ENCODE measurements at regions of chr19 and their contacts with region 1.

Region 1: DNA sequence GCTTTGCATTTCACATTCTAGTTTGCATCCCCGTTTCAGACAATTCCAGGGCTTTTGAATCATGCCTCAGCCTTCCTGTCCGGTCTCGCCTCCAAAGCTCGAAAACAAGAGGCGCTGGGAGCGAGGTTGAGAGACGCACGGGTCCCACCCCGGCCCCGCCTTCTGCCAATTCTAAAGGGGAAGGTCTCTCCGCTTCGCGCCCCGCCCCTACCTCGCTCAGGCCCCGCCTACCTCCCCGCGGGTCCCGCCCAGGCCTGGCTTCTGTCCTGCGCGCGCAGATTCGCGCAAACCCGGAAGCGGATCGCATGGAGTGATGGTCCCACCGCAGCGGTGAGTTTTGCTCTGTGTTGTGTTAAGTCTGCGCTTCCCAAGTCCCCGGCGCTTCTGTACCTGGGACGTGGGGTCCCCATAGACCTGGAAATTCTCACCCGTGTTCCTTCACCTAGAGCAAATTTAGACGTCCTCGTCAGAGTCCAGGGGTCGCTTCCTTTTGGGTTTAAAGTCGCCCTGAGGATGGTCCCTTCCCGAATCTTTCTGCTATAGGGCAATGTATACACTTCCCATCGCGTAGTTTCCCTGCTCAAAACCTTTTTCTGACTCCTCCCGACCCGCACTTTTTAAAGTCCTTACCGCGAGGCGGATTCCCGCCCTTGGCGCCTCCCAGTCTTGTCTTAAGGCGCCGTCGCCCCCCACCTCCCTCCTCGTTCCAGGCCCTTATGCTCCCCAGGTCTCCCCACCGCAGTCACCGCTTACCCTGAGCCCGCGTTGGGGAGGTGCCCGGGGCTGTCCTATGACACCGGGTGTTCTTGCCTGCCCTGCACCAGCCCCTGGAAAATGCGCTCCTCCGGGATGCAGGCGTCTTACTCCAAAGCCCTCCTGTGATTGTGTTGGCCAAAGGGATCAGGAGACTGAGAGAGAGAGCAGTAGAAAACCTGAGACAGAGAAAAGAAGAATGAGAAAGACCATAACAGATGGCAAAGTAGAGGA is at the start of gene ZNF845:
- DNase-seq: peak; percentile 95
- H3K4me3 Mint-ChIP-seq: peak within 1 kb of the TSS; percentile 91
- H3K27ac Mint-ChIP-seq: peak within 1 kb of the TSS; percentile 80
- H3K4me1 Mint-ChIP-seq: peaks cover 10% of the 10 kb centered on the region
- H3K27me3 Mint-ChIP-seq: no peaks in the 10 kb centered on the region
- total RNA-seq, gene ZNF845: 6.5 and 6.7 TPM in 2 replicates

Region 2: GRCh38 chr19:52942386-52943133 is 391.2 kb before region 1 on chr19:
- intact Hi-C with region 1: loop called (anchors 1 kb)
- DNase-seq: peak; percentile 94
- H3K4me3 Mint-ChIP-seq: peak overlapping the region; percentile 89
- H3K27ac Mint-ChIP-seq: peak overlapping the region; percentile 88
- H3K4me1 Mint-ChIP-seq: peaks cover 27% of the 10 kb centered on the region
- H3K27me3 Mint-ChIP-seq: peaks cover 2% of the 10 kb centered on the region

Region 3: DNA sequence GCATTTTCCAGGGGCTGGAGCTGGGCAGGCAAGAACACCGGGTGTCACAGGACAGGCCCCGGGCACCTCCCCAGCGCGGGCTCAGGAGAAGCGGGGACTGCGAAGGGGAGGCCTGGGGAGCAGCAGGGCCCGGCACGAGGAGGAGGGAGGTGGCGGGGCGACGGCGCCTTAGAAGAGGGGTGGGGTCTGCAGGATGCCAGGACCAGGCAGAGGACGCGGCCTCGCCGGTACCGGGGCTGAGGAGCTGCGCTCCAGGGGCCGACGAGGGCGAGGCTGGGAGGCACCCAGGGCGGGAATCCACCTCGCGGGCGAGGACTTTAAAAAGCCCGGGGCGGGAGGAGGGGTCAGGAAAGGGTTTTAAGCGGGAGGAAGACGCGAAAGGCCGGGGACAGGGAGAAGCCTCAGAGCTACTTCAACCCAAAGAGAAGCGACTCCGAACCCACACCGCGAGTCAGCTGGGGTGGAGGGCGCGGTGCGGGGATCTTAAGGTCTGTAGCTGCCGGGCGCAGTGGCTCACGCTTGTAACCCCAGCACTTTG is 175.6 kb before region 1 on chr19:
- intact Hi-C with region 1: loop called (anchors 2 kb)
- DNase-seq: peak; percentile 16
- H3K4me3 Mint-ChIP-seq: peak overlapping the region; percentile 85
- H3K27ac Mint-ChIP-seq: peak overlapping the region; percentile 71
- H3K4me1 Mint-ChIP-seq: peaks cover 15% of the 10 kb centered on the region
- H3K27me3 Mint-ChIP-seq: no peaks in the 10 kb centered on the region

Region 4: GRCh38 chr19:53381379-53381778 is 47.6 kb after region 1 on chr19:
- intact Hi-C with region 1: no loop called
- DNase-seq: no peak
- H3K4me3 Mint-ChIP-seq: no peak overlapping the region
- H3K27ac Mint-ChIP-seq: no peak overlapping the region
- H3K4me1 Mint-ChIP-seq: no peaks in the 10 kb centered on the region
- H3K27me3 Mint-ChIP-seq: no peaks in the 10 kb centered on the region

Region 5: GRCh38 chr19:53394974-53395839 is 61.5 kb after region 1 on chr19 and contains the start of gene ZNF765:
- intact Hi-C with region 1: loop called (anchors 1 kb)
- DNase-seq: peak; percentile 93
- H3K4me3 Mint-ChIP-seq: peak within 1 kb of the TSS; percentile 98
- H3K27ac Mint-ChIP-seq: peak within 1 kb of the TSS; percentile 85
- H3K4me1 Mint-ChIP-seq: peaks cover 27% of the 10 kb centered on the region
- H3K27me3 Mint-ChIP-seq: no peaks in the 10 kb centered on the region
- total RNA-seq, gene ZNF765: 9.2 and 10.8 TPM in 2 replicates

Measured in activated T-helper 1 cell treated with anti-CD3 and anti-CD28 coated beads, Interleukin-12 subunit alpha, Interleukin-12 subunit beta, Interleukin-2, Interleukin-4 antibody, amounts not matched to agents 30 ng/mL and 10 ng/mL and 1 ng/mL, durations not matched to agents 14 hours and 24 hours and 36 hours (primary cell).